CD14-positive monocyte (primary cell): ENCODE measurements at regions of chr1 and their contacts with region 1.

Region 1: GRCh38 chr1:41720861-41721410 is 197.8 kb downstream of the HIVEP3 start:
- DNase-seq: peak in 2 of 3 donors; percentile 27 to 40
- H3K4me3 ChIP-seq: no peak overlapping the region
- H3K4me3 Mint-ChIP-seq: no peak overlapping the region
- H3K27ac ChIP-seq: no peak overlapping the region
- H3K27ac Mint-ChIP-seq: peak overlapping the region in 3 of 7 donors; percentile 6 to 56 (median 37)
- H3K4me1 ChIP-seq: peaks cover 80 to 88% of the 10 kb centered on the region in 2 donors
- H3K4me1 Mint-ChIP-seq: peaks cover 83% of the 10 kb centered on the region
- H3K27me3 ChIP-seq: no peaks in the 10 kb centered on the region
- H3K27me3 Mint-ChIP-seq: peaks cover 0 to 3% (median 1%) of the 10 kb centered on the region in 3 donors
- CTCF ChIP-seq: no peak

Region 2: DNA sequence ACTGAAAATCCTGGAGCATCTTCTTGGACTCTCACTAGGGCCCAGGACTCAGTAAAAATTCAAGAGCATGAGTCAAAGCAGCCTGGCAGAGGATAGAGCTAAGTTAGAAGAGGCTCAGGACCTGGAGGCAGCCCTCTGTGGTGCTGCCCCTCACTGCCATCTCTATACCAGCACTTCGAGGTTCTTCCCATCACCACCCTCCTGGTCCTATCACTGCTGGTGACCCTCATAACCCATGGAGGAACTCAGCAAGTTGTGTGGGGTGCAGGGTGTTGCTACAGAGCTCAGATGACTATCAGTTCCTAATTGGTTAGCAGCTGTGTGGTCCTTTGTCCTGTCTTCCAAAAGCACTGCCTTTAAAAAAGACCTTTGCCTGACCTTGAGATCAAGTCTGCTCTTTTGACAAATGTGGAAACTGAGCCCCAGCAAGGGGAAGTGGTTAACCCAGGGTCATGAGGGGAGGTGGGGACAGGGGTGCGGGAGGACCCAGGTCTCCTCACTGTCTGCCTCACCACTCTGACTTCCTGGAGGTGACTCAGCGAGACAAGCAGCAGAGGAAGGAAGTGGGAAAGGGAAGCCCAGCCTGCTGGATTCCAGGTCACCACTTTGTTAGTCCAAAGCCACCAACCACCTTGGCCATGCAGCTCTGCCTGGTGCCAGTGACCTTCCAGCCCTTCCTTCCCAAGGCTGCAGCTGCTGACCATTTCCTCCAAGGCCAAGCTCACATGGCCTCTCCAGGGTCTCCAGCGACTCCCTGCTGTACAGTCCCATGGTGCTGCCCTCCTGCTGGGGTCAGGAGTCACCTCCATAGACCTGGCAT is 37.0 kb before region 1 on chr1:
- intact Hi-C with region 1: loop called (anchors 5 kb)
- DNase-seq: peak; percentile 65 to 94 (median 88)
- H3K4me3 ChIP-seq: peak overlapping the region in 1 of 3 experiments; percentile 54
- H3K4me3 Mint-ChIP-seq: peak overlapping the region; percentile 16 to 77
- H3K27ac ChIP-seq: peak overlapping the region; percentile 18 to 79
- H3K27ac Mint-ChIP-seq: peak overlapping the region; percentile 79 to 92 (median 88)
- H3K4me1 ChIP-seq: peaks cover 48 to 75% of the 10 kb centered on the region in 2 donors
- H3K4me1 Mint-ChIP-seq: peaks cover 77% of the 10 kb centered on the region
- H3K27me3 ChIP-seq: no peaks in the 10 kb centered on the region
- H3K27me3 Mint-ChIP-seq: no peaks in the 10 kb centered on the region
- CTCF ChIP-seq: no peak